MCF 10A (cell line): ENCODE measurements at regions of chr19 and their contacts with region 1.

Region 1: GRCh38 chr19:13117772-13118423 is at the start of gene NACC1:
- DNase-seq: peak; percentile 90
- H3K4me3 Mint-ChIP-seq: peak within 1 kb of the TSS; percentile 98
- H3K27ac Mint-ChIP-seq: peak within 1 kb of the TSS; percentile 98
- H3K4me1 Mint-ChIP-seq: peaks cover 30% of the 10 kb centered on the region
- H3K27me3 Mint-ChIP-seq: no peaks in the 10 kb centered on the region
- CTCF ChIP-seq: no peak
- total RNA-seq, gene NACC1: 55.9 and 67.3 TPM in 2 replicates

Region 2: DNA sequence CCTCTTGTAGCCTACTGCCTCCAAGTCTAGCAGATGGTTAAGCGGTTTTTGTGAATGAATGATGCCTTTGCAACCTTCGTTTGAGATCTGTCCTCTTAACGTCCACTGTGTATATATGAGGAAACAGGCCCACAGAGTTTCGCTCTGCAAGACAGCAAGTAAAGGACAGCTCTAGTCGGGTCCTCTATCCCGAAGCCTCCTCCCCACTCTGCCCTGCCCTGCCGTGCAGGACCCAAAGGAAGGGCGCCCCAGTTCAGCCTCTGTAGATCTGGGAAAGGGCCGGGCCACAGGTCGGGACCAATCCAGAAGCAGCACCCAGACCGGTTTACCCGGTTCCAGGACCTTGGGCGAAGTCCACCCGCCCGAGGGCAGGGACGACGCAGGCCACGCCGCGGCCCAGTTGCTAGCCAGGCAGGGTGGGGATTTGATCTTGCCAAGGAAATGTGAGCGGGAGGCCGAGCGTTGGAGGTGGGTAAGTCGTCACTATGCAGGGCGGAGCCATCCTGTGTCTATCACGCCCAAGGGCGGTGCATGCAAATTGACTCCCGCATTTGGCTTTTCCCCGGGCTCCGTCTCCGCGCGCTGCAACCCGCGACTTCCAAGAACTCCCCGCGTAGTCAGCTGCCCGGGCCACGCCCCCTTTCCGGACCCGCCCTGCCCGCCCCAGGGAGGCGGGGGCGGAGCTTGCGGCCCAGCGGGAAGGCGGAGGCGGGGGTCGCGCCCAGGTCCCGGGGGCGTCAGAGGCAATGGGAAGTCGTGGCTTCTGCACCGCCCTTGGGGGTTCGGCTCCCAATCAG is 44.8 kb after region 1 on chr19:
- CTCF ChIA-PET with region 1: no interaction called
- POLR2A ChIA-PET with region 1: interaction called, 10 read pairs
- intact Hi-C with region 1: loop called (anchors 5 kb)
- DNase-seq: peak; percentile 99
- H3K4me3 Mint-ChIP-seq: peak overlapping the region; percentile 62
- H3K27ac Mint-ChIP-seq: peak overlapping the region; percentile 85
- H3K4me1 Mint-ChIP-seq: peaks cover 22% of the 10 kb centered on the region
- H3K27me3 Mint-ChIP-seq: no peaks in the 10 kb centered on the region
- CTCF ChIP-seq: no peak